Transverse colon (tissue), 4 donors: ENCODE measurements at regions of chr4 and their contacts with region 1.

Region 1: GRCh38 chr4:48602222-48602621 is 112.2 kb downstream of the ZAR1 start:
- DNase-seq: no peak
- H3K4me3 ChIP-seq: no peak overlapping the region
- H3K27ac ChIP-seq: peak overlapping the region; percentile 52 to 86 (median 67)
- H3K4me1 ChIP-seq: peaks cover 7 to 57% (median 30%) of the 10 kb centered on the region in 4 donors
- H3K27me3 ChIP-seq: no peaks in the 10 kb centered on the region
- CTCF ChIP-seq: no peak
- EP300 ChIP-seq: no peak
- POLR2A ChIP-seq: no peak

Region 2: GRCh38 chr4:48483006-48483776 is 119.0 kb before region 1 on chr4 and contains the start of gene SLC10A4:
- in situ Hi-C with region 1: no loop called
- intact Hi-C with region 1: no loop called
- DNase-seq: no peak
- H3K4me3 ChIP-seq: peak within 1 kb of the TSS in 3 of 4 donors; percentile 10 to 47 (median 27)
- H3K27ac ChIP-seq: no peak within 1 kb of the TSS
- H3K4me1 ChIP-seq: peaks cover 0 to 9% (median 8%) of the 10 kb centered on the region in 4 donors
- H3K27me3 ChIP-seq: peaks cover 84% of the 10 kb centered on the region
- CTCF ChIP-seq: no peak
- EP300 ChIP-seq: no peak
- POLR2A ChIP-seq: no peak
- total RNA-seq, gene SLC10A4: 1.2 to 6.0 TPM in 2 of 4 donors, not detected in the others

Region 3: DNA sequence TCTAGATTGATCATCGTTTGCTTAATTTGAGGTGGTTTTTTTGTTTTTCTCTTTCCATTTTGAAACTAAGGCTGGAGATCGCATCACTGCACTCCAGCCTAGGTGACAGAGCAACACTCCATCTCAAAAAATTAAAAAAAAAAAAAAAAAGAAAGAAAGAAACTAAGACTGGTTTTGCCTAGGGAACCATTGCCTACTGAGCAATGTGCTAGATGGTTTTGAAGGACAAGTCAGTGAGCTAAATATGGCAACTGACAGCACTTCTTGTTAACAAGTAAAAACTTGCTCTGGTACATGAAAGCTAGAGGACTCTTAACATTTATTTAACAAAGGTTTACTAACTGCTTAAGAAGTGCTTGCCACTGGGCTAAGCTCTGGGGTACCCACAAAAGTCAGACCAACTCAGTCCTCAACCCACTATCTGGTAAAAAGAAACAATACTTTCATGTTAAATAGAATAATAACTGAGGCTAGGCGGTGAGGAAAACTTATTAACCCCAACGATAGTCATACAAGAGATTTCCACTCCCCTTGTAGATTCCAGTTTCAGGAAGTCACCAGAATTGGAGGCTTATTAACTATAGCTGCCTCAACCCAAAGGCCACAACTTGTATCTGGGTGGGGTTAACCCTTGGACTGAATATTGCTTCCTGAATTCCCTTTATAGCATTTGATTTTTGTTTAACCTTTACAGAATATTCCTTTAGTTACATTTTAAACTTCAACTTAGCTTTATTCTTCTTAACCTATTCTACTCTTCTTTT is 66.2 kb after region 1 on chr4:
- in situ Hi-C with region 1: loop called in 1 of 4 experiments (anchors 10 kb)
- intact Hi-C with region 1: no loop called
- DNase-seq: no peak
- H3K4me3 ChIP-seq: peak overlapping the region in 1 of 4 donors; percentile 12
- H3K27ac ChIP-seq: peak overlapping the region; percentile 70 to 84 (median 80)
- H3K4me1 ChIP-seq: peaks cover 10 to 71% (median 57%) of the 10 kb centered on the region in 4 donors
- H3K27me3 ChIP-seq: no peaks in the 10 kb centered on the region
- CTCF ChIP-seq: no peak
- EP300 ChIP-seq: no peak
- POLR2A ChIP-seq: no peak

Region 4: GRCh38 chr4:48778431-48779094 is 176.3 kb after region 1 on chr4:
- in situ Hi-C with region 1: no loop called
- intact Hi-C with region 1: no loop called
- DNase-seq: no peak
- H3K4me3 ChIP-seq: peak overlapping the region; percentile 67 to 97 (median 88)
- H3K27ac ChIP-seq: peak overlapping the region; percentile 96 to 99 (median 98)
- H3K4me1 ChIP-seq: peaks cover 17 to 54% (median 33%) of the 10 kb centered on the region in 4 donors
- H3K27me3 ChIP-seq: no peaks in the 10 kb centered on the region
- CTCF ChIP-seq: no peak
- EP300 ChIP-seq: no peak
- POLR2A ChIP-seq: no peak

Region 5: GRCh38 chr4:48851651-48852050 is 249.4 kb after region 1 on chr4:
- in situ Hi-C with region 1: no loop called
- intact Hi-C with region 1: no loop called
- DNase-seq: no peak
- H3K4me3 ChIP-seq: no peak overlapping the region
- H3K27ac ChIP-seq: no peak overlapping the region
- H3K4me1 ChIP-seq: no peaks in the 10 kb centered on the region
- H3K27me3 ChIP-seq: no peaks in the 10 kb centered on the region
- CTCF ChIP-seq: no peak
- EP300 ChIP-seq: no peak
- POLR2A ChIP-seq: no peak